Spleen (tissue), 13 donors: ENCODE measurements at regions of chr18 and their contacts with region 1.

Region 1: DNA sequence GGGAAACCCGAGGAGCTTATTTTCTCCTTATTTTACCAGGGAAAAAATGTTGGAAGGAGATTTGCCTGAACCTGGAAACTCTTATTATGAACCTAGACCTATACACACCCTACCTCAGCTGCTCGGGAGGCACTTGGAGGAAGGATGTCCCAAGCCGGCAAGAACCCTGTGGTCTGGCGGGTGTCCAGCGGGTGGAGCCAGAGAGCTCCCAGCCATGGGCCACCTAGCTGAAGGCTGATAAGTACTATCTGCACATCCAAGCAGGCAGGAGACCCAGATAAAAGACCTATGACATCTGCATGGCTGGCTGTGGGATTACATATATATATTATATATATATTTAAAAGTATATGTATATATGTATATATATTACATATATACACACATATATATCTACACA is 1.1 kb upstream of the SLC14A1 start:
- DNase-seq: peak; percentile 92
- H3K4me3 ChIP-seq: no peak overlapping the region
- H3K27ac ChIP-seq: no peak overlapping the region
- H3K4me1 ChIP-seq: peaks cover 0 to 4% (median 0%) of the 10 kb centered on the region in 6 donors
- H3K27me3 ChIP-seq: no peaks in the 10 kb centered on the region
- CTCF ChIP-seq: peak; percentile 34 to 84 (median 69)
- POLR2A ChIP-seq: no peak

Region 2: DNA sequence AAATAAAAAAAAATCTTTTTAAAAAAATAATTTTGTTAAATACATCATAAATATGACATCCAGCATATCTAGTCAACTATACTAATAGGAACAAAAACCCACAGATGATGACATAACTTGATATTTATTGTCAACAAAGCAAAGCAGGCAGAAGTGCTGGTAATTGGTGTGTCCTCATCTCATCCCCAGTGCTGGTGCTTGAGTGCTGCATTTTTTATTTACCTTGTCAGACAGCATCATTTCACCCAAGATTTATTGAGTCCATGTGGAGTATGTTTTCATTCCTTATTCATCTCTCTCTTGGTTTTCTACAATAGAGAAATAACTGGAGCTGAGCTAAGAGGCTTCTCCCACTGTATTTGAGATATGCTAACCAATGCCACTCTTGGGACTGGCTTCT is 299.2 kb before region 1 on chr18:
- intact Hi-C with region 1: no loop called
- DNase-seq: no peak
- H3K4me3 ChIP-seq: no peak overlapping the region
- H3K27ac ChIP-seq: no peak overlapping the region
- H3K4me1 ChIP-seq: no peaks in the 10 kb centered on the region
- H3K27me3 ChIP-seq: peaks cover 0 to 6% (median 0%) of the 10 kb centered on the region in 7 donors
- CTCF ChIP-seq: no peak
- POLR2A ChIP-seq: no peak

Region 3: DNA sequence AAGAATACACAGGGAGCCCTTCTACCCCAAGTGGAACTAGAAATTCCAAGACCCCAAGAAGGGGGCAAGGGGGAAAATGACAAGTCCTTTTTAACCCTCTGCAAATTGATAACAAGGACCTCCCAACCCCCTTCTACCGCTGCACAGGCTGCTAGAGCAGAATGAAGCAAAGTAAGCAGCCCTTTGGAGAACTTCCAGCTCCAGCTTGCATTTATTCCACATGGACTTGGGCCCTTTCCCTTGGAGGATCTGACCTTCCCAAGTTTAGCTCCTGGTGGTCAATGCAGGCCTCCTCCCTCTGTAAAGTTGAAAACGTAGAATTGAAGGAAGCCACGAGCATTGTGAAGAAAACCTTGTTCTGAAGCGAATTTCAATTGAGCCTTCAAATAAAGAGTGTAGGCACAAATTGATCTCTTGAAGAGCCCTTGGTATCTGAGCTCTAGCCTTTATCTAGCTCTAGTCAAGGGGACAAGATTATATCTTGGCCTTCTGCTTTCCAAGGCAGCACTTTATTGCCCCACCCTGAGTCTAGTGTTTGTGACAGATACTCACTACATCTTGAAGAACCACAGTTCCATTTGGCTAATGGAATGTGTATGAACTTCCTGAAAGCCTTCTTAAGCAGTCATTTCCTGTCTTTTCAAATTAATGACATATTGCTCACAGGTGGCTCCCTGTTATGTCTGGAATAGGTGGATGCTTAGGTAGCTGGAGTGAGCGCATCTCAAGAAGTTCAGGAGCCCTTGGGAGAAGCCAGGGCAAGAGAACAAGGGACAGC is 70.4 kb before region 1 on chr18:
- intact Hi-C with region 1: no loop called
- DNase-seq: no peak
- H3K4me3 ChIP-seq: no peak overlapping the region
- H3K27ac ChIP-seq: no peak overlapping the region
- H3K4me1 ChIP-seq: peaks cover 0 to 4% (median 0%) of the 10 kb centered on the region in 6 donors
- H3K27me3 ChIP-seq: no peaks in the 10 kb centered on the region
- CTCF ChIP-seq: no peak
- POLR2A ChIP-seq: no peak

Region 4: DNA sequence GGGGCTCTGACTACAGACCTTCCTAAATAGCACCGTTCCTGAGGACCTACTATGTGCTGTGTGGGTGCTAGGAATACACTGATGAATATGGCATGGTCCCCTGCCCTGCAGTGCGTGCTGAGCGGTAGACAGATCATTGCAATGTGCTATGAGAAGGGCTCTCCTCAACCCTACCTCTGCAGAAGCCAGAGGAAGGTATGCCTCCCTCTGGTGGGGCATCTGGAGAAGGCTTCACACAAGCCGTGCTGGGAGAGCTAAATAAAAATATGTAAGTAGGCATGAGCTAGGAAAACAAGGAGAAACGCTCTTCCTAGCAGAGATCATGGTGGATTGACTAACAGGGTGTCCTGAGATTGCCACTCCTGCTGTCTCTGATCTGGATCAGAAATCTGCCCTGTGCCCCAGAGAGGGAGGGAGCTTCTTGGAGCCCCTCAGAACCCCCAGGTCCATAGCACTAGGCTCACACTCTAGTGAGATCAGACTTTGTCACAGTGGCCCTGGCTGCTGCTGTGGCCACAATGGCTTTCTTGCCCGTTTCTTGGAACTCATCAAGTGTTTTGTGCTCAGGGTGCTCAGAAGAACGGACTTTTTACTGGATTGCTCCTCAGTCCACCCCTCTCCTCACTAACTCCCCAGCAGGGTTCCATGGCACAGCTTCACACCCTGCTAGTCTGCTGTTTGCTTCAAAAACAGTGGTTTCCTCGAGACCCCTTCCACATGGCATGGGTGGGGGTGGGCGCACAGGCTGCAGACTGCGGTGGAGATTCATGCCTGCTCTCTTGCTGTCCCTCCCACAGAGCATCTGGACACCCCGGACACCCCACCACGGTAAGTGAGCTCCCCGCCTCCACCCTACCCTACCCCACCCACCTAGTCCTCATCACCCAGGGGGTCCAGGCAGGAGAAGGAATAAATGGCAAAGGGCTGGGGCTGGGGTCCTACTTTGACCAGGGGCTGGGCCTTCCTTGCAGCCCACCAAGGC is 116.8 kb after region 1 on chr18:
- intact Hi-C with region 1: loop called (anchors 10 kb)
- DNase-seq: peak; percentile 69
- H3K4me3 ChIP-seq: no peak overlapping the region
- H3K27ac ChIP-seq: no peak overlapping the region
- H3K4me1 ChIP-seq: peaks cover 8 to 46% (median 24%) of the 10 kb centered on the region in 6 donors
- H3K27me3 ChIP-seq: peaks cover 0 to 48% (median 22%) of the 10 kb centered on the region in 7 donors
- CTCF ChIP-seq: peak in 9 of 11 experiments; percentile 24 to 65 (median 46)
- POLR2A ChIP-seq: no peak